SK-N-SH (cell line): ENCODE measurements at regions of chr6 and their contacts with region 1.

Region 1: DNA sequence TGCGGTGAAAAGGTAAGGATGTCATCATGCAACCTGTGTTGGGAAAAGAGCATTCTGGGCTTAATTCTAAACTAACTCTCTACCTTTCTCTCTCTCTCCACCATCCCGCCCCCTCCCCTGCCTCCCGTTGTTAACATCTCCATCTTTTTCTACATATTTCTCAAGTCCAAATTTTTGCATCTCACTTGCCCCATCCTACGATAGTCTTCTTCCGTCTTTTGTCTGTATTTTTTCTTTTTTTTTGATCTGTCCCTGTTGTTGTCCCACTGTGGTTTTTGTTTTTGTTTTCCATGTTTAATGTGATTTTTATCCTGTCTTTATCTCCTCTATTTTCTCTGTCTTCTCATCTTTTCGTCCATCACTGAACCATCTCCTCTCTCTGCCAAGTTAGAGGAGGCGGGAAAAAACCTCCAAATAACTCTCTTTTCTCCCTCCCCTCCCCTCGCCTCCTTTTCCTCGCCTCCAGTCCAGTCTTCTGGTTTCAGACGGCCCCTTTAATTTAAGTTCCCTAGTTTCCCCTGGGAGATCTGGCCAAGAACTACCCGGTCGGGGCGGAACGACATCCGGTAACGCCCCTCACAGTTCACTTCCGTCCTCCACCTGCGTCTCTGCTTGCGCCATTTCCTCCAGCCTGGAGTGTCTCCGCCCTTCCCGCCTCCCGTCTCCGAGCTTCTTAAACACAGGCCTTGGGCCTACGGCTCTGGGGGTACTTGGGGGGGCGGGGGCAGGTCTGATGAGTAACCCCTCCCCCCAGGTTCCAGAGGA is at the start of gene NFKBIL1:
- DNase-seq: peak; percentile 90
- H3K4me3 ChIP-seq: peak within 1 kb of the TSS; percentile 52 to 77
- H3K27ac ChIP-seq: peak within 1 kb of the TSS; percentile 74 to 78
- H3K4me1 ChIP-seq: peaks cover 8 to 11% of the 10 kb centered on the region in 2 experiments; a peak in 3 of 4 replicates
- H3K27me3 ChIP-seq: no peaks in the 10 kb centered on the region
- CTCF ChIP-seq: no peak
- EP300 ChIP-seq: no peak
- RAD21 ChIP-seq: no peak
- polyA plus RNA-seq, gene NFKBIL1: 14.6 and 17.1 TPM in 2 replicates

Region 2: DNA sequence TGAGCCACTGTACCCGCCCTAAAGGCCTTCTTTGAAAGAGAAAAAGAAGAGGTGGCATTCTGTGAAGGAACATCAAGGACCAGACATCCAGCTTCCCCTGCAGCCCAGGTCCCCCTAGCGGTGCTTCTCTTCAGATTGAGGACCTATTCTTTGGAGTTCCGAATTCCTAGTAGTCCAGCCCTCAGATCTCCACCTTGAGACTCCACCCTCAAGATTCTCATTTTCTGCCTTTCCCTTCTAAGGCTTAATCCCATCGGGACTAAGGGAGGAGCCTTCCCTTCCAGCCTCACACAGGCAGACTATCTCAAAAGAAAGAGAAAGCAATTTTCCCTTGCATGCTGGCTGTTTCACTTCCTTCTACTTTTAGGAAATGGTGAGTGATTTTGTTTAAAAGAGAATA is 504.3 kb before region 1 on chr6:
- CTCF ChIA-PET with region 1: no interaction called
- POLR2A ChIA-PET with region 1: no interaction called
- DNase-seq: peak; percentile 29
- H3K4me3 ChIP-seq: no peak overlapping the region
- H3K27ac ChIP-seq: no peak overlapping the region
- H3K4me1 ChIP-seq: peaks cover 2 to 3% of the 10 kb centered on the region in 2 experiments; a peak in 1 of 4 replicates
- H3K27me3 ChIP-seq: no peaks in the 10 kb centered on the region
- CTCF ChIP-seq: peak; percentile 67
- EP300 ChIP-seq: no peak
- RAD21 ChIP-seq: peak; percentile 64

Region 3: GRCh38 chr6:31493875-31494694 is 53.1 kb before region 1 on chr6:
- CTCF ChIA-PET with region 1: interaction called, 16 read pairs
- POLR2A ChIA-PET with region 1: no interaction called
- DNase-seq: peak; percentile 62
- H3K4me3 ChIP-seq: peak overlapping the region; percentile 49 to 80
- H3K27ac ChIP-seq: peak overlapping the region in 1 of 2 experiments; percentile 67; a peak in 2 of 4 replicates
- H3K4me1 ChIP-seq: peaks cover 3 to 7% of the 10 kb centered on the region in 2 experiments; a peak in 2 of 4 replicates
- H3K27me3 ChIP-seq: no peaks in the 10 kb centered on the region; the same call in 1 of the 2 replicates
- CTCF ChIP-seq: peak; percentile 80
- EP300 ChIP-seq: no peak
- RAD21 ChIP-seq: peak; percentile 61

Region 4: DNA sequence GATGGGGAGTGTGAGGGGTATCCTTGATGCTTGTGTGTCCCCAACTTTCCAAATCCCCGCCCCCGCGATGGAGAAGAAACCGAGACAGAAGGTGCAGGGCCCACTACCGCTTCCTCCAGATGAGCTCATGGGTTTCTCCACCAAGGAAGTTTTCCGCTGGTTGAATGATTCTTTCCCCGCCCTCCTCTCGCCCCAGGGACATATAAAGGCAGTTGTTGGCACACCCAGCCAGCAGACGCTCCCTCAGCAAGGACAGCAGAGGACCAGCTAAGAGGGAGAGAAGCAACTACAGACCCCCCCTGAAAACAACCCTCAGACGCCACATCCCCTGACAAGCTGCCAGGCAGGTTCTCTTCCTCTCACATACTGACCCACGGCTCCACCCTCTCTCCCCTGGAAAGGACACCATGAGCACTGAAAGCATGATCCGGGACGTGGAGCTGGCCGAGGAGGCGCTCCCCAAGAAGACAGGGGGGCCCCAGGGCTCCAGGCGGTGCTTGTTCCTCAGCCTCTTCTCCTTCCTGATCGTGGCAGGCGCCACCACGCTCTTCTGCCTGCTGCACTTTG is 28.3 kb after region 1 on chr6 and contains the start of gene TNF:
- CTCF ChIA-PET with region 1: interaction called, 89 read pairs
- POLR2A ChIA-PET with region 1: interaction called, 5 read pairs
- DNase-seq: no peak
- H3K4me3 ChIP-seq: no peak within 1 kb of the TSS
- H3K27ac ChIP-seq: no peak within 1 kb of the TSS
- H3K4me1 ChIP-seq: peaks cover 0 to 2% of the 10 kb centered on the region in 2 experiments; a peak in 1 of 4 replicates
- H3K27me3 ChIP-seq: no peaks in the 10 kb centered on the region
- CTCF ChIP-seq: no peak
- EP300 ChIP-seq: no peak
- RAD21 ChIP-seq: no peak
- polyA plus RNA-seq, gene TNF: not detected in 2 replicates

Region 5: DNA sequence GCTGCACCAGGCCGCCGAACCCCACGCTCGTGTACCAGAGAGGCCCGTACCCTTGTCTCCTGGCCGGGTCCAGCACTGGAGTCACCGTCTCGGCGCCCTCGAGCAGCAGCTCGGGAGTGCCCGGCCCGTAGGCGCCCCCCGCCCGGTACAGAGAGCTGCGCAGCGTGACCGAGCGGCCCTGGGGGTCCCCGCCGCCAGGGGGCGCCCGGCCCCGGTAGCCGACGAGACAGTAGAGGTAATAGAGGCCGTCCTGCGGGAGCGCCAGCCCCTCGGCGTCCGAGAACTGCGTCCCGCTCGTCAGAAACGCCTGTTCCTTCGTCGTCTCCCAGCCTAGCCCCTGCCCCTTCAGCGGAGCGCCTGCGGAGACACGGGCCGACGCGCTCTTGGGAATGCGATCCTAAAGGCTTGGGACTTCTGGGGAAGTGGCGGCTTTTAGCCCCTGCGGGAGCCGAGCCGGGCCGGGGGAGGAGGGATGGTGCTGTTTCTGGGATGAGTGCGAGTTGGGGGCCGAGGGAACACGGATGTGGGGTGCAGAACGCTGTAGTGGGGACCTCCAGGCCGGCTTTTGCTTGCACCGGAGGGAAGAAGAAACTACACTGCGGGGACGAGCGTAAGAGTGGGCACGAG is 33.8 kb after region 1 on chr6:
- CTCF ChIA-PET with region 1: interaction called, 89 read pairs
- POLR2A ChIA-PET with region 1: interaction called, 5 read pairs
- DNase-seq: peak; percentile 97
- H3K4me3 ChIP-seq: peak overlapping the region; percentile 63 to 96
- H3K27ac ChIP-seq: peak overlapping the region in 1 of 2 experiments; percentile 51; a peak in 1 of 4 replicates
- H3K4me1 ChIP-seq: peaks cover 0 to 11% of the 10 kb centered on the region in 2 experiments; a peak in 1 of 4 replicates
- H3K27me3 ChIP-seq: no peaks in the 10 kb centered on the region
- CTCF ChIP-seq: peak; percentile 90
- EP300 ChIP-seq: no peak
- RAD21 ChIP-seq: peak; percentile 61

Region 6: GRCh38 chr6:31588871-31589650 is 41.9 kb after region 1 on chr6:
- CTCF ChIA-PET with region 1: interaction called, 301 read pairs
- POLR2A ChIA-PET with region 1: interaction called, 3 read pairs
- DNase-seq: no peak
- H3K4me3 ChIP-seq: no peak overlapping the region
- H3K27ac ChIP-seq: no peak overlapping the region
- H3K4me1 ChIP-seq: no peaks in the 10 kb centered on the region; a peak in 1 of 4 replicates
- H3K27me3 ChIP-seq: no peaks in the 10 kb centered on the region
- CTCF ChIP-seq: no peak
- EP300 ChIP-seq: no peak
- RAD21 ChIP-seq: no peak